ENCODE measurements at regions of chr12 and their contacts with region 1.

Region 1: DNA sequence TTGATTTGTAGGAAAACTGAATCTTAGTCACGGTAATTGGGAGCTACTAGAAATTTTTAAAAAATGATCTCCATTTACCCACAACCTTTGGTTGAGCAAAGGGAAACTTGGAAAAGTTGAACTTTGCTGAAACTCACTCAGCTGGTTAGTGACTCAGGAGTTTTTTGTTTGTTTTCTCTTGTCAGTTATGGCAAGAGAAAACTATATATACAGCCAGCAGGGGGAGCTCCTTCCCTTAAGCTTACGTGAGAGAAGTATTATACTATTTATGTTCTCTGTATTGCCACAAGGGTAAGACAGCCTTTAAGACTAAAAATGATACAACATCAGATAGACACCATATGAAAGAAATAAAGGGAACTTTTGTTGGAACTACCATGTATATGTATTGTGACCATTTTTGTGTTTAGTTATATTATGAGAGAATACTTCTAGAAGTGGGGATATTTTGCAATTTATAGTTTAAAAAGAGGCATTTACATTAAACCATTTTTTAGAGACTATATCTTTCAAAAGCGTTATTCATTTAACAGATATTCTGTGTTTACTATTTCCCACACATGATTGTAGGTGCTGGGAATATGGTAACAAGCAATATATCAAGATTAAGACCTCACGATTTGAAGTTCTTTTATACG is 28.1 kb upstream of the TBC1D30 start:
- DNase-seq: peak; percentile 81
- ATAC-seq: peak; percentile 82
- H3K4me3 ChIP-seq: no peak overlapping the region
- H3K4me3 Mint-ChIP-seq: no peak overlapping the region
- H3K27ac ChIP-seq: no peak overlapping the region
- H3K27ac Mint-ChIP-seq: no peak overlapping the region
- H3K4me1 ChIP-seq: no peaks in the 10 kb centered on the region
- H3K4me1 Mint-ChIP-seq: no peaks in the 10 kb centered on the region
- H3K27me3 ChIP-seq: no peaks in the 10 kb centered on the region
- H3K27me3 Mint-ChIP-seq: peaks cover 24% of the 10 kb centered on the region
- CTCF ChIP-seq: peak; percentile 95

Region 2: GRCh38 chr12:64780531-64781279 is 15.6 kb before region 1 on chr12:
- CTCF ChIA-PET with region 1: interaction called, 30 read pairs
- POLR2A ChIA-PET with region 1: no interaction called
- intact Hi-C with region 1: loop called (anchors 2 kb)
- DNase-seq: peak; percentile 46
- ATAC-seq: peak; percentile 62
- H3K4me3 ChIP-seq: peak overlapping the region in 4 of 5 experiments; percentile 41 to 69 (median 56)
- H3K4me3 Mint-ChIP-seq: peak overlapping the region; percentile 91
- H3K27ac ChIP-seq: no peak overlapping the region
- H3K27ac Mint-ChIP-seq: no peak overlapping the region
- H3K4me1 ChIP-seq: peaks cover 22% of the 10 kb centered on the region in 2 donors
- H3K4me1 Mint-ChIP-seq: peaks cover 24% of the 10 kb centered on the region
- H3K27me3 ChIP-seq: peaks cover 0 to 41% (median 22%) of the 10 kb centered on the region in 4 experiments
- H3K27me3 Mint-ChIP-seq: peaks cover 62% of the 10 kb centered on the region
- CTCF ChIP-seq: no peak

Region 3: DNA sequence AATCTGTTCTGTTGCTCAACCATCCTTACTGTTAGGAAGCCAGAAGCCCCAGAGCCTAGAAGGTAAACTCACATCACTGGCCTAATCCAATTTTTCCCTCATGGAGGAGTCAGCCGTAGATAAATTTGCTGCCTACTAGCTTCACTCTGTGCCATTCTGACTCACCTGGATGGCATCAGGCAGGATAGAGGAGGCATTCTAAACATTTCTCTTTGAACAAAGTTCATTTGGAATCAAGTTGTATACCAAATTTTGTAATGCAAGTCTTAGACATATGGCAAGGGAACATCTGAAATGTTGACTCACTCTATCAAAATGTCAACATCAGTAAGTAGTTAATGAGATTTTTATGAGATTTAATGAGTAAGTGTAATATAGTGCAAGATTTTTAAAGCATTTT is 14.5 kb after region 1 on chr12:
- CTCF ChIA-PET with region 1: interaction called, 13 read pairs
- POLR2A ChIA-PET with region 1: no interaction called
- intact Hi-C with region 1: no loop called
- DNase-seq: no peak
- ATAC-seq: no peak
- H3K4me3 ChIP-seq: no peak overlapping the region
- H3K4me3 Mint-ChIP-seq: no peak overlapping the region
- H3K27ac ChIP-seq: no peak overlapping the region
- H3K27ac Mint-ChIP-seq: no peak overlapping the region
- H3K4me1 ChIP-seq: no peaks in the 10 kb centered on the region
- H3K4me1 Mint-ChIP-seq: no peaks in the 10 kb centered on the region
- H3K27me3 ChIP-seq: peaks cover 0 to 8% (median 3%) of the 10 kb centered on the region in 4 experiments
- H3K27me3 Mint-ChIP-seq: peaks cover 24% of the 10 kb centered on the region
- CTCF ChIP-seq: no peak

Region 4: DNA sequence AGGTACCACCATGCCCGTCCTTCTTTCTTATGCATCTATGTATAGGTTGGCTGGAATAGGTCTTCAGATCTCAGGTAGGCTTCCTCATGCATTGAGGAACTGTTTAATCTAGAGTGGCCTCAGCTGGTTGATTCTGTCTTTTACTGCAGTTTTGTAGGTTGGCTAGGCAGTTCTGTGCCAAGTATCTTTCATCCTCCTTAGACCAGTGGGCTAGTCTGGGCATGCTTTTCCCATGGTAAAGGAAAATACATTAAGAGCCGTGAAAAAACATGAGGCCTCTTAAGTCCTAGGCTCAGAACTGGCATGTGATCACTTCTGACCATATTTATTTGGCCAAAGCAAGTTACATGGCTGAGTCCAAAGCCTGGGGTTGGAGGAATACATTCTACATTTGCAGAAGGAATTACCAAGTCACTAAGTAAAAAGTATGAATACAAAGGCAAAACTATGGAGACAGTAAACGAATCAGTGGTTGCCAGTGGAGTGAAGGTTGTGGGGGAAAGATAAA is 187.5 kb after region 1 on chr12:
- CTCF ChIA-PET with region 1: no interaction called
- POLR2A ChIA-PET with region 1: no interaction called
- intact Hi-C with region 1: no loop called
- DNase-seq: no peak
- ATAC-seq: no peak
- H3K4me3 ChIP-seq: no peak overlapping the region
- H3K4me3 Mint-ChIP-seq: no peak overlapping the region
- H3K27ac ChIP-seq: no peak overlapping the region
- H3K27ac Mint-ChIP-seq: no peak overlapping the region
- H3K4me1 ChIP-seq: no peaks in the 10 kb centered on the region
- H3K4me1 Mint-ChIP-seq: no peaks in the 10 kb centered on the region
- H3K27me3 ChIP-seq: peaks cover 0 to 5% (median 0%) of the 10 kb centered on the region in 4 experiments
- H3K27me3 Mint-ChIP-seq: peaks cover 13% of the 10 kb centered on the region
- CTCF ChIP-seq: no peak

Region 5: GRCh38 chr12:65232476-65233077 is 436.2 kb after region 1 on chr12:
- CTCF ChIA-PET with region 1: interaction called, 3 read pairs
- POLR2A ChIA-PET with region 1: no interaction called
- intact Hi-C with region 1: loop called (anchors 2 kb)
- DNase-seq: peak; percentile 49
- ATAC-seq: no peak
- H3K4me3 ChIP-seq: no peak overlapping the region
- H3K4me3 Mint-ChIP-seq: no peak overlapping the region
- H3K27ac ChIP-seq: peak overlapping the region in 1 of 2 donors; percentile 37
- H3K27ac Mint-ChIP-seq: no peak overlapping the region
- H3K4me1 ChIP-seq: peaks cover 0 to 2% of the 10 kb centered on the region in 2 donors
- H3K4me1 Mint-ChIP-seq: peaks cover 8% of the 10 kb centered on the region
- H3K27me3 ChIP-seq: no peaks in the 10 kb centered on the region
- H3K27me3 Mint-ChIP-seq: no peaks in the 10 kb centered on the region
- CTCF ChIP-seq: peak; percentile 86